Calu3 (cell line): ENCODE measurements at regions of chr18 and their contacts with region 1.

Region 1: DNA sequence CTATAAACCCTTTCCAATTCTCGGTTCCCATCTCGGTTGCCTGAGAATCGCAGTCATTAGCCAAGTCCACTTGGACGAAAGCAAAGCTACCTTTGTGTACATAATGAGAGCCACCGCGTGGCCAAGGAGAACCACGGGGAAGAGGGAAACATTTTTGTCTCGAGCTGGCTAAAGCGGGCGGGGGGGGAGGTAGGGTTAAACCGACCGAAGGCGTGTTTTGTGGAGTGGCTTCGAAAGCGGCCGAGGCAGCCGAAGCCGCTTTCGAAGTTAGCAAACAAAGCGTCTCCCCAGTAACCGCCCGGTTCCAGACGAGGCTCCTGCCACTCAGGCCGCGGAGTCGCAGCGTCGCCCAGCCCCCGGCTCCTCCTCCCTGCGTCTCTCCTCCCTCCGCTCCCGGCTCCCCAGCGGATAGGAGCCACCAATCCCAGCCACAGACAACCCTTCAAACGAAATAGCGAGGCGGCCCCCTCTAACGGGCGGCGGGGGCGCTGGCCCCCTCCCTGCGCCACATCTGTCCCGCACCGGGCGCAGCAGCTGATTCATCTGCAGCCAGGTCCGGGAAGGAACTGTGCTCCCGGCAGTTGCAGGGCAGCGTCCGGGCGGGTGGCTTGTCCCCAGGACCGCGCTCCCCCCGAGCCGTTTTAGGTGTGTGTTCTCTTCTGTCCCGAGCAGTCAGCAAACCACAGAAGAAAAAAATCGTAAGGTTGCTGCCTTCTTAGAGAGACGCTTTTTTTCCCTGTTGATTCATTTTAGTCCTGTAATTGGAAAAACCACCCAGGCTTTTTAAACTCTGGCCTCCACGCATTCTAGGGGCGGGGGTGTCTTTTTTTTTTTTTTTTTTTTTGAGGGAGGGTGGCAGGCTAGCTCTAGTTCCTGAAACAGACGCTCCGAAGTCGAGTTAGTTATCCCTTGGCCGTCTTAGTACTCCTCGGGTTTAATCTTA is 1.8 kb upstream of the TGIF1 start:
- DNase-seq: peak; percentile 97
- H3K4me3 Mint-ChIP-seq: peak overlapping the region; percentile 92
- H3K27ac Mint-ChIP-seq: peak overlapping the region; percentile 95
- H3K4me1 Mint-ChIP-seq: peaks cover 7% of the 10 kb centered on the region
- H3K27me3 Mint-ChIP-seq: no peaks in the 10 kb centered on the region
- CTCF ChIP-seq: no peak

Region 2: DNA sequence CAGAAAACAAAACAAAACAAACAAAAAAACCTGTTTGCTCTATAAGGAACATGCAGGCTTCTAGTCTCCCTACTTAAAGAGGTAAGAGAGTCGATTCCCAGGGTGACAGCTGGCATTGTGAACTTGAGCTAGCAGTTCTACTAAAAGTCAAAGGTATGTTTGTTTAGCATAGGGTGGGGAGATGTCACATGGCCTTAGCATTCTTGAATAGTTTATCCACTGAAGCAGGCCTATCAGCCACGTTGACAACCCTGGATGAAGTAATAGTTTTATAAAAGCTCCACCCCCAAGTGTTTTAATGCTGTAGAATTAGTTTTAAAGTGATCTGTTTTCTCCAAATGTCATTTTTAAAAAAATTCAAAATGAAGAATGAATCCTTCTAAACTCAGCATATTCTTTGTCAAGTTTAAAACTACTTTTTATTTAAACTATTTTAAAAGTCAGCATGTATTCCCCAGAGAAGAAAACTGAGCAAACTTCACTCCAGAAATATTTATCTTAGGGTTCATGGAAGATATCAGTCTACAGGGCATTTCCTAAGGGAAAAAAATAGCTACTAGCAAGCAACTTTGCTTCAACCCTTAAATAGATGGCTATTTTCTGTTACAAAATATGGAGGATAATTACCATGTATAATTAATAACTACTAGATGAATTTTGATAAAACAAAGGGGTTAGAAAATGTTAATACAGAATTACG is 230.1 kb before region 1 on chr18:
- CTCF ChIA-PET with region 1: no interaction called
- intact Hi-C with region 1: no loop called
- DNase-seq: peak; percentile 54
- H3K4me3 Mint-ChIP-seq: peak overlapping the region; percentile 4
- H3K27ac Mint-ChIP-seq: peak overlapping the region; percentile 97
- H3K4me1 Mint-ChIP-seq: peaks cover 35% of the 10 kb centered on the region
- H3K27me3 Mint-ChIP-seq: no peaks in the 10 kb centered on the region
- CTCF ChIP-seq: no peak

Region 3: DNA sequence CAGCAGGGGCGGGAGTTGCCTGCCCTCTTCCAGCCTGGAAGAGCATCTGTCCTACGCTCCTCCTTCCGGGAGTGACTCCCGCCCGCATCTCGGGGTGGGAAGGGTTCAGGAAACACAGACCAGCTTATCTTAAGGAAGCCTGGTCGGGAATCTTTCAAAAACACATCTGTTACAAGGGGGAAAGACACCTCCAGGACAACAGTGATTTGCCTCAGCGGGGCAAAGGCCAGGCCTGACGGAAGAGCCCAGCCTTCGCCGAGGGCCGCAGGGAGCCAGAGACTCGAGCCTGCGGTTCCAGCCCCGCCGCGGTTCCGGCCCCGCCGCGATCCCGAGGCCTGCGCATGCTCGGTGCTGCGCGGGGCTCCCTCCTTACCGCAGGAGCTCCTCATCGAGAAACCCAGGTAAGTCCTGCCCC is 36.3 kb before region 1 on chr18:
- CTCF ChIA-PET with region 1: interaction called, 6 read pairs
- intact Hi-C with region 1: loop called (anchors 5 kb)
- DNase-seq: peak; percentile 74
- H3K4me3 Mint-ChIP-seq: peak overlapping the region; percentile 75
- H3K27ac Mint-ChIP-seq: peak overlapping the region; percentile 60
- H3K4me1 Mint-ChIP-seq: peaks cover 29% of the 10 kb centered on the region
- H3K27me3 Mint-ChIP-seq: no peaks in the 10 kb centered on the region
- CTCF ChIP-seq: no peak